MCF 10A (cell line): ENCODE measurements at regions of chr2 and their contacts with region 1.

Region 1: GRCh38 chr2:226835796-226836547 is at the start of gene RHBDD1:
- DNase-seq: peak; percentile 96
- H3K4me3 Mint-ChIP-seq: peak within 1 kb of the TSS; percentile 91
- H3K27ac Mint-ChIP-seq: peak within 1 kb of the TSS; percentile 98
- H3K4me1 Mint-ChIP-seq: peaks cover 11% of the 10 kb centered on the region
- H3K27me3 Mint-ChIP-seq: no peaks in the 10 kb centered on the region
- CTCF ChIP-seq: no peak
- total RNA-seq, gene RHBDD1: 75.2 and 76.0 TPM in 2 replicates

Region 2: DNA sequence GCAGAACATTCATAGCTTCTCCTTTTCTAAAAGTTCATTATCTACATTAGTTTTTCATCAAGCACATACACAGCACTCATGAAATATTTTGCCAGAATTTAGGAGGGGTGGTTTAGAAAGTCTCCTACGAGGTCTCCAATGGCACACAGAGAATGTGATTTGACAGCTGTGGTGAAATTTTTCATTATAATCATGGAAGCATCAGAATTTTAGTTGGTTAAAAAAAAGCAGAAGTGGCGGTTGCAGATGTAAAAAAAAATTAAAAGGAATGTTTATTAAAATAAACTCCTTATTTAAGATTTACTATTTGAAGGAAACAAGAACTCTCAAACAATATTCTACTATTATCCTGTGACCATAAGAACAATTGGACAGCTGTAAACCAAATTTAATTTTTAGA is 10.9 kb before region 1 on chr2:
- CTCF ChIA-PET with region 1: interaction called, 3 read pairs
- POLR2A ChIA-PET with region 1: interaction called, 15 read pairs
- intact Hi-C with region 1: no loop called
- DNase-seq: no peak
- H3K4me3 Mint-ChIP-seq: no peak overlapping the region
- H3K27ac Mint-ChIP-seq: no peak overlapping the region
- H3K4me1 Mint-ChIP-seq: no peaks in the 10 kb centered on the region
- H3K27me3 Mint-ChIP-seq: no peaks in the 10 kb centered on the region
- CTCF ChIP-seq: no peak

Region 3: GRCh38 chr2:226891780-226892590 is 56.0 kb after region 1 on chr2:
- CTCF ChIA-PET with region 1: interaction called, 3 read pairs
- POLR2A ChIA-PET with region 1: interaction called, 23 read pairs
- intact Hi-C with region 1: no loop called
- DNase-seq: peak; percentile 30
- H3K4me3 Mint-ChIP-seq: peak overlapping the region; percentile 23
- H3K27ac Mint-ChIP-seq: peak overlapping the region; percentile 63
- H3K4me1 Mint-ChIP-seq: peaks cover 26% of the 10 kb centered on the region
- H3K27me3 Mint-ChIP-seq: no peaks in the 10 kb centered on the region
- CTCF ChIP-seq: no peak

Region 4: DNA sequence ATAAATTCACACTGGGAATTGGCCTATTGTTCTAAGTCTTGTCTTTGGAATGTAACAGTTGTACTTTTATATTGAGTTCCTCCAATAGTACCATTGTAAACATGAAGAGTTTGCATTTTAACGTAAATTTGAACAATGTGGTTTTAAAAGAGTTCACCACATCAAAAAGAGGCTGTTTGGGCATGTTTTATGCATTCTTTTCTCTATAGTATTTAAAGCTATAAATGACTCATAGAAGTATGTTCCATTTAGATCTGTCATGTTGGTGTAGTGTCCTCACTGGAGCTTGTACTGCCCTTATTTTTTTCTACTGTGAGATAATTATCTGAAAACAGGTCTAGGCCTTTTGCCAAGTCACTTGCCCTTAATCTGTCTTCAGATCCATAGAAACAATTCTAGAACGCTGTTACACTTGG is 141.8 kb after region 1 on chr2:
- CTCF ChIA-PET with region 1: interaction called, 5 read pairs
- POLR2A ChIA-PET with region 1: interaction called, 20 read pairs
- intact Hi-C with region 1: no loop called
- DNase-seq: peak; percentile 40
- H3K4me3 Mint-ChIP-seq: no peak overlapping the region
- H3K27ac Mint-ChIP-seq: no peak overlapping the region
- H3K4me1 Mint-ChIP-seq: peaks cover 26% of the 10 kb centered on the region
- H3K27me3 Mint-ChIP-seq: no peaks in the 10 kb centered on the region
- CTCF ChIP-seq: no peak